Heart left ventricle (tissue), 16 donors: ENCODE measurements at regions of chr2 and their contacts with region 1.

Region 1: DNA sequence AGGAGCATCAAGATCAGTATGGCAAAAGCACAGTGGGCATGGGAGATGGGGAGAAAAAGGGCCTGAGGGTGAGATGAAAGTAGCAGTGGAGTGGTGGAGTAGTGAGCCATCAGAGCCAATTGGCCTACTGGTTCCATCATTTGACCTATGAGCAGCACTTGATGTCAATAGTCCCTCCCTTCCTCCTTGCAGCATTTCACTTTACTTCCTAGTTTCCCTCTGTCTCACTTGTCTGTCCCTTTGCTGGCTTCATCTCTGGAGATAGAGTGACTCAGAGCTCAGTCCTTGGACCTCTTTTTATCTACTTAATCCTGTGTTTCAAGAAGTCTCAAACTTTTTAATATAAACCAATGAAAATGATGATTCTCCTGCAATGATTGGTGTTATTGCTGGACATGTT is 32.1 kb downstream of the FBXO48 start:
- DNase-seq: no peak
- ATAC-seq: peak in 2 of 4 donors; percentile 16 to 30
- H3K4me3 ChIP-seq: no peak overlapping the region
- H3K27ac ChIP-seq: peak overlapping the region in 2 of 12 donors; percentile 60 to 62
- H3K4me1 ChIP-seq: peaks cover 0 to 27% (median 14%) of the 10 kb centered on the region in 12 donors
- H3K27me3 ChIP-seq: no peaks in the 10 kb centered on the region
- CTCF ChIP-seq: no peak
- POLR2A ChIP-seq: no peak

Region 2: DNA sequence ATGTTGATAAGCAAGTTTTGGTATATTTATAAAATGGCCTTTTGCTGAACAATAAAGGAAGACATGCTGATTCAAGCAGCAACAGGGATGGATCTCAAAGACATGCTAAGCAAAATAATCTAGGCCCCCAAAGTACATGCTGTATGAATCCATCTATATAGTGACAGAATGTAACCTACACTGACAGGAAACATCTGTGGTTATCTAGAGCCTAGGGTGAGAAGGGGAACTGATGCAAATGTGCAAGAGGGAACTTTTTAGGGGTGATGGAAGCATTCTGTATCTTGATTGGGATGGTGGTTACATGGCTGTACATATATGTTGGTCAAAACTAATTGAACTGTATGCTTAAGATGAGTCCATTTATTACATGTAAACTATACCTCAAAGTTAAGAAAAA is 139.5 kb before region 1 on chr2:
- intact Hi-C with region 1: loop called in 1 of 10 experiments (anchors 10 kb)
- DNase-seq: no peak
- ATAC-seq: no peak
- H3K4me3 ChIP-seq: no peak overlapping the region
- H3K27ac ChIP-seq: no peak overlapping the region
- H3K4me1 ChIP-seq: peaks cover 0 to 24% (median 2%) of the 10 kb centered on the region in 12 donors
- H3K27me3 ChIP-seq: no peaks in the 10 kb centered on the region
- CTCF ChIP-seq: no peak
- POLR2A ChIP-seq: no peak